ENCODE measurements at regions of chr17 and their contacts with region 1.

Region 1: GRCh38 chr17:50721194-50722010 is 2.0 kb downstream of the LUC7L3 start:
- DNase-seq: no peak
- H3K4me3 ChIP-seq: peak overlapping the region; percentile 95
- H3K27ac ChIP-seq: peak overlapping the region; percentile 99
- H3K4me1 ChIP-seq: peaks cover 24% of the 10 kb centered on the region
- H3K27me3 ChIP-seq: no peaks in the 10 kb centered on the region
- CTCF ChIP-seq: no peak

Region 2: DNA sequence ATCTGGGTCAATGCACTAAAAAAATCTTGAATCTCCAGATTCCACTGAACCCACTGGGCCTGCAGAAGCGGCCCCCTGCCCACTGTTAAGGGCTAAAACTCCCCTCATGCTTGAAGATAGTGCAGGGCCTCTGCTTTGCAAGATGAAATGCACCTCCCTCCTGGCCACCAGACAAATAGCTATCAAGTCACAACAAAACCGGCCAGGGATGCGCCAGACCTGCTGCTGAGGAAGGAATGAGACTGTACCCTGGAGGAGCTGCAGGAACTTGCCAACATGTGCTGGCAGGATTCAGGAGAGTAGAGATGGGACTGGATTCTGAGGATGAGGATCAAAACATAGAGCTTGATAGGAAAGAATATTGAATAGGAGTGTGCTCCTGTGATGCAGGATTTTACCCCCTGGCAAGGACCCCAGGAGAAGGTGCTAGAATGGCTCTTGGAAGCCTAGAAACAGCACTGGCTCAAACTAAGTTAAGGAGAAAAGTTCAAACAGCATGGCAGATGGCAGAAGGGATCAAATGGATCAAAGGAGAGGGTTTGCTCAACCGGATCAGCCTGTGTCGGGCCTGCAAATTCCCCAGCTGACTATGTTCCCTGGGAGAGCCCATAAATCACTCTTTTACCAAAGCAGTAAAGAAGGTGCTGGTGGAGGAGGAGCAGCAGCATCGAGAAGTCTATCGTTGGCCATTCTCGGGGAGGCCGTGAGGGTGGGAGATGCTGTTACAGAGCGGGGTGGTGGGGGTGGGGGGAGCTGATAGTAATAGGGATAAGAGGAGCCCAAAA is 402.7 kb before region 1 on chr17:
- intact Hi-C with region 1: no loop called
- DNase-seq: no peak
- H3K4me3 ChIP-seq: no peak overlapping the region
- H3K27ac ChIP-seq: no peak overlapping the region
- H3K4me1 ChIP-seq: no peaks in the 10 kb centered on the region
- H3K27me3 ChIP-seq: no peaks in the 10 kb centered on the region
- CTCF ChIP-seq: no peak

Region 3: DNA sequence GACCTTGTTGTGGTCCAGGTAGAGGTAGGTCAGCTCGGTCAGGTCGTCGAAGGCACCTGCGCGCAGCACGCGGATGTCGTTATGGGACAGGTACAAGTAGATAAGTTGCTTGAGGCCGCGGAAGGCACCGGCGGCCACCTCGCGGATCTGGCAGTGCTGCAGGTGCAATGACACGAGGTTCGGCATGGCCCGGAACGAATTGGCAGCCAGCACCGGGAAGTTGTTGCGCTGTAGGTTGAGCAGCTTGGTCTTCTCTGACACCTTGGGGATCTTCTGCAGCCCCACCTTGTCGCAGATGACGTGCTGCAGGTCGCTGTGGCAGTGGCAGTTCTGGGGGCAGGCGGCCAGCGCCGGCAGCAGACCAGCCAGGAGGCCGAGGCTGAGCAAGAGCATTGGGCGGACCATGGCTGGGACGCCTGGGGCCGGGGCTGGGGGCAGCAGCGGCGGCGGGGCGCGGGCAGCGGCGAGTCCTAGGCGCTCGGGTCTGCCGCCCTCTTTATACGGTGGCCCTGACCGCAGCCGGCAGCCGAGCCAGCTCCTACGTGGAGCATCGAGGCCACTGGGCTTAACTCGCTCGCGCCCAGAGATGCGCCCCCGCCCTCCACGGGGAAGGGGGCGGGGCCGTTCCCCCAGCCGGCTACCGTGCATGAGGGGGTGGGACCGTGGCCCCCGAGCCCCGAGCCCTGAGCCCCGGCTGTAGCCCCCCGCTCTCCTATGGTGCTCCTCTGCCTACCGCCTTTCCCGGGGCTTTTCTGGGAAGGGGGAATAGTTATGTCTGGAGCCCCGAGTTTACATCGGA is 252.8 kb before region 1 on chr17 and contains the start of gene CHAD:
- intact Hi-C with region 1: no loop called
- DNase-seq: peak; percentile 31
- H3K4me3 ChIP-seq: peak within 1 kb of the TSS; percentile 11
- H3K27ac ChIP-seq: no peak within 1 kb of the TSS
- H3K4me1 ChIP-seq: peaks cover 25% of the 10 kb centered on the region
- H3K27me3 ChIP-seq: peaks cover 11% of the 10 kb centered on the region
- CTCF ChIP-seq: no peak
- total RNA-seq, gene CHAD: 1.8 to 3.6 TPM

Region 4: DNA sequence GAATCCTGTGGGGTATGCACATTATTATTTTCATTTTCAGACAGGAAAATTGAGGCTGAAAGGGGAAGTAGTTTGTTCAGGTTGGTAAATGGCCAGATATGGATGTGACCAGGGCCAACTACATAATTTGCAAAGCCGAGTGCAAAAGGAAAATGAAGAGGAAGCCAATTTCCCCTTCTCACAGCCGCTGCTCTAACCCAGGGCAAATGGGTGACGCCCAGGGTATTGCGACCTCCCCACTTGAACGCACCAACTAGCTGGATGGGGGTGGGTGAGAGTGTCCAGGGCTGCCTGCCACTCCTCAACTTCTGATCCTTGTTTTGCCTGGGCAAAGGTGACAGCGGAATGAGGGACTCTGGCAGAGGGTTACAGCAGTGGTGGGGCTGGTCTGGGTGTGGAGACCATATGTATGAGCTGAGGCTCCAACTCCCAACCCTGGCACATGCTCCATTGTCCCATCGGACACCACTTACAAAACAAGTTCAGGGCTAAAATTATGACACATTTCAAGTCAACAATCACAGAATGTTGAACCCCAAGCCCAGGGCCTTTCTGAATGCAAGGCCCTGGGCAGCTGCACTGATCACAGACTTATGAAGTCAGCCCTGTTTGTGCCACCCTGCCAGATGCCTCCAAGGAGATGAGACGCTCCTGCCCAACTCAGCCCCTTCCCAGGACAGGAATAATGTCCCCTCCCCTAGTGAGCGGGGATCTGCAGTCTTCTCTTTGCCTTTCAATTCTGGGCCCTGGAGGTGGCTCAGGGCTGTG is 44.2 kb after region 1 on chr17:
- intact Hi-C with region 1: loop called (anchors 5 kb)
- DNase-seq: peak; percentile 80
- H3K4me3 ChIP-seq: peak overlapping the region; percentile 13
- H3K27ac ChIP-seq: peak overlapping the region; percentile 83
- H3K4me1 ChIP-seq: peaks cover 8% of the 10 kb centered on the region
- H3K27me3 ChIP-seq: no peaks in the 10 kb centered on the region
- CTCF ChIP-seq: no peak

Region 5: GRCh38 chr17:50904521-50905459 is 183.4 kb after region 1 on chr17:
- intact Hi-C with region 1: no loop called
- DNase-seq: peak; percentile 67
- H3K4me3 ChIP-seq: no peak overlapping the region
- H3K27ac ChIP-seq: peak overlapping the region; percentile 82
- H3K4me1 ChIP-seq: peaks cover 24% of the 10 kb centered on the region
- H3K27me3 ChIP-seq: no peaks in the 10 kb centered on the region
- CTCF ChIP-seq: no peak

Measured in colonic mucosa (tissue), 4 donors.